Psoas muscle (tissue), 8 donors: ENCODE measurements at regions of chr3 and their contacts with region 1.

Region 1: GRCh38 chr3:128794770-128795649 is 69.0 kb downstream of the RAB7A start:
- DNase-seq: peak in 1 of 2 donors; percentile 65
- ATAC-seq: peak; percentile 80 to 89 (median 82)
- H3K4me3 ChIP-seq: no peak overlapping the region
- H3K27ac ChIP-seq: peak overlapping the region; percentile 83
- H3K4me1 ChIP-seq: peaks cover 51% of the 10 kb centered on the region
- H3K27me3 ChIP-seq: no peaks in the 10 kb centered on the region
- CTCF ChIP-seq: peak; percentile 80

Region 2: GRCh38 chr3:128617557-128618397 is 177.2 kb before region 1 on chr3:
- intact Hi-C with region 1: loop called in 1 of 2 experiments (anchors 1 kb)
- DNase-seq: peak; percentile 98 to 99
- ATAC-seq: peak; percentile 97 to 99 (median 98)
- H3K4me3 ChIP-seq: peak overlapping the region; percentile 99
- H3K27ac ChIP-seq: peak overlapping the region; percentile 78
- H3K4me1 ChIP-seq: peaks cover 16% of the 10 kb centered on the region
- H3K27me3 ChIP-seq: no peaks in the 10 kb centered on the region
- CTCF ChIP-seq: peak; percentile 94

Region 3: GRCh38 chr3:128725932-128726690 is 68.9 kb before region 1 on chr3 and contains the start of gene RAB7A:
- intact Hi-C with region 1: loop called in 1 of 2 experiments (anchors 5 kb)
- DNase-seq: peak; percentile 98 to 99
- ATAC-seq: peak; percentile 93 to 98 (median 97)
- H3K4me3 ChIP-seq: peak within 1 kb of the TSS; percentile 98
- H3K27ac ChIP-seq: peak within 1 kb of the TSS; percentile 100
- H3K4me1 ChIP-seq: peaks cover 34% of the 10 kb centered on the region
- H3K27me3 ChIP-seq: no peaks in the 10 kb centered on the region
- CTCF ChIP-seq: no peak
- total RNA-seq, gene RAB7A: 232 to 375 (median 284) TPM

Region 4: DNA sequence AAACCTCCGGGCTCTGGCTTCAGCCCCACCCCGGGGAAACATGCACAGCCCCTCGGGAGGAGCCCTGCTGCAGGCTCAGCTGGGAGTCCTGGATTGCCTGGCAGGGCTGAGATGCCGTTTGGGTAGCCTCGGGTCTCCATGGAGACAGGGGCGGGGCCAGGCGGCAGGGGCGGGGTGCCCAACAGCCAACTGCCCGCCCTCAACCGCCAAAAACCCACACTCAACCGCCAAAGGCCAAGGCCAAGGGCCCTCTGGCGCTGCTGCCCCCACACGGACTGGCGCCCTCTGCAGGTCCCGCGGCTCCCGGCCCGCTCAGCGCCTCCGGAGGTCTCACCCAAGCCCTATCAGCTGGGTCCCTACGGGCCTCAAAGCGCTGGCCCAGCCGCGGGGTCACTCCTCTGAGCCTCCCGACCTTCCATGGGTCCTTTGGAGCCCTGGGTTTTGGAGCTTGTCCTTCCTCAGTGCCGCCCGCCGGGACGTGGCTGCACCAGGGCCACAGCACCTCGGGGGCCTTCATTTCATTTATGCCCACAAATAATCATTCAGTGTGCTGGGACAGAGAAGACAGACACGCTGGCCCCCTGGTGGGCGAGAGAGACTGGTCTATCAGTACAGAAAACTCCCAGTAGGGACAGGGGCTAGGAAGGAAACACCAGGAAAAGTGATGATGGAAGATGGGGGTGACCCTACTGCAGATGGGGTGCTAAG is 50.9 kb after region 1 on chr3:
- intact Hi-C with region 1: loop called in 1 of 2 experiments (anchors 5 kb)
- DNase-seq: peak; percentile 88 to 96
- ATAC-seq: peak; percentile 94 to 97 (median 96)
- H3K4me3 ChIP-seq: peak overlapping the region; percentile 66
- H3K27ac ChIP-seq: peak overlapping the region; percentile 81
- H3K4me1 ChIP-seq: peaks cover 12% of the 10 kb centered on the region
- H3K27me3 ChIP-seq: no peaks in the 10 kb centered on the region
- CTCF ChIP-seq: peak; percentile 67